ENCODE measurements at regions of chr9 and their contacts with region 1.

Region 1: DNA sequence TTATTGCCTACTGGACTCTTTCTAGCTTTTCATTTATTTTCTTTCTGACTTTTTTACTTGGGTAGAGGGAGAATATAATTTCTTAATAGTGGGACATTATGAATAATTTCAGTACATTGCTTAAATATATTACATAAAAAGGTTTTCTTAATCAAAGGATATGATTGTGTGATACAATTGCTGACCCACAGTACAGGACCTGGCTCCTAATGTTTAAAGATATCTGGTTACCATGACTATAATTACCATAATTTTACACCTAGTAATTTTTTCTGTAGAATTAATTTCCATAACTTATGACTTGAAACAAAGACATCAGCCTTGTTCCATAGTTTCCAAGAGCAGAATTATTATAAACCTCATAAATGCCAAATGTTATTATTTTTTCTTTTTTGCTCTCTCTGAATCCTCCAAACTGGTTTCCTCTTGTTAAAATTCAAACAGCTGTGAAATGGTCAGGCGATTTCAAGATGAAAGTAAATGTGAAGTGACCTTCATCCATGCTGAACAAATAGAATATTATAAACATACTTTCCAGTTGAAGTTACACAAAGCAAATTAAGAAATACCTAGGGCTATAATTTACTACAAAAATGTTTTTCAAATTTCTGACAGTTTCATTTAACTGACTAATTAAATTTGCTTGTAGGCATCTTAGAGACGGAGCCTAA is 301.2 kb upstream of the TYRP1 start:
- DNase-seq: no peak
- ATAC-seq: no peak
- H3K4me3 ChIP-seq: no peak overlapping the region
- H3K27ac ChIP-seq: no peak overlapping the region
- H3K4me1 ChIP-seq: no peaks in the 10 kb centered on the region
- H3K27me3 ChIP-seq: no peaks in the 10 kb centered on the region
- CTCF ChIP-seq: no peak
- POLR2A ChIP-seq: no peak

Region 2: DNA sequence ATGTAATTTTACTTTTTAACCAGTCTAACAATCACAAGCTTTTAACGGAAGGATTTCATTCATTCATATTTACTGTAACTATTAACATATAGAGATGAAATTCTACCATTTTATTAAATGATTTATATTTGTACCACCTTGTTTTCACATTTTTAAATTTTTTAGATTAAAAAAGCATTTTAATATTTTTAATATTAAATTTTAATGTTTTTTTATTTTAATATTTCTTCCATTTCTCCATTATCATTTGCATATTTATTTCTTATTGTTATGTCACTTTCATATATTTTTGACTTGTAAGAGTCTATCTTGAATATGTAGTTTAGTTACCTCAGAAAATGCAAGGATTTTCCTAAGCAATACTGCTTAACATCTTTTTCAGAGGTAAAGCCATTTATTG is 745.1 kb before region 1 on chr9:
- intact Hi-C with region 1: no loop called
- DNase-seq: no peak
- ATAC-seq: no peak
- H3K4me3 ChIP-seq: no peak overlapping the region
- H3K27ac ChIP-seq: no peak overlapping the region
- H3K4me1 ChIP-seq: no peaks in the 10 kb centered on the region
- H3K27me3 ChIP-seq: no peaks in the 10 kb centered on the region
- CTCF ChIP-seq: no peak
- POLR2A ChIP-seq: no peak

Region 3: DNA sequence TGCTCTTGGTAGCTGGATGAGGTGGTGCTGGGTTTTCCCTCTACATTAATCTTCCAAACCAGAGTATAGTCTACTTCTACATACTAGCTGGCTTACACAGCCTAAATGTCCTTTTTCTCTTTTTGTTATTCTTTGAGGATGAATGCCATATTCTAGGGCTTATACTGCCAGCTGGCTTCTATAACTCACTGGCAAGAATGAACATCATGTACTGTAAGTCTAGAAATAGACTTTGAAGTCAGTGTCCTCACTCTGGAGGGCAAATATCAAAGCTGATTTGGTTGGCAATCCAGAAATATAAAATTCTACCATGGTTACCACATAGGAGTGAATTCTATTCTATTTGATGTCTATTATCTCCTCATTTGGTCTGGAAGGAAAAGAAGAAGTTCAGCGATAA is 49.5 kb after region 1 on chr9:
- intact Hi-C with region 1: loop called in 1 of 10 experiments (anchors 10 kb)
- DNase-seq: no peak
- ATAC-seq: peak in 3 of 4 donors; percentile 62 to 75 (median 67)
- H3K4me3 ChIP-seq: no peak overlapping the region
- H3K27ac ChIP-seq: peak overlapping the region in 2 of 12 donors; percentile 14 to 16
- H3K4me1 ChIP-seq: no peaks in the 10 kb centered on the region
- H3K27me3 ChIP-seq: no peaks in the 10 kb centered on the region
- CTCF ChIP-seq: no peak
- POLR2A ChIP-seq: no peak